A549 (cell line): ENCODE measurements at regions of chr12 and their contacts with region 1.

Region 1: GRCh38 chr12:116236148-116236731 is 41.3 kb downstream of the MED13L start:
- DNase-seq: peak; percentile 33 to 63
- ATAC-seq: peak; percentile 62 to 81; a peak in 4 of 6 replicates
- H3K4me3 ChIP-seq: no peak overlapping the region
- H3K27ac ChIP-seq: no peak overlapping the region
- H3K4me1 ChIP-seq: peaks cover 32% of the 10 kb centered on the region
- CTCF ChIP-seq: peak; percentile 91
- EP300 ChIP-seq: no peak
- POLR2A ChIP-seq: no peak
- RAD21 ChIP-seq: peak; percentile 85 to 87

Region 2: GRCh38 chr12:115998119-115998633 is 238.1 kb before region 1 on chr12:
- CTCF ChIA-PET with region 1: interaction called, 11 read pairs
- POLR2A ChIA-PET with region 1: no interaction called
- DNase-seq: peak; percentile 45 to 56
- ATAC-seq: peak; percentile 50 to 71; a peak in 4 of 6 replicates
- H3K4me3 ChIP-seq: no peak overlapping the region
- H3K27ac ChIP-seq: peak overlapping the region in 1 of 2 experiments; percentile 30; a peak in 1 of 6 replicates
- H3K4me1 ChIP-seq: 0 out of 3 replicates have a peak, but pooled peaks cover 5% of the 10 kb centered on the region
- CTCF ChIP-seq: peak; percentile 88
- EP300 ChIP-seq: no peak
- POLR2A ChIP-seq: no peak
- RAD21 ChIP-seq: peak; percentile 73 to 77

Region 3: DNA sequence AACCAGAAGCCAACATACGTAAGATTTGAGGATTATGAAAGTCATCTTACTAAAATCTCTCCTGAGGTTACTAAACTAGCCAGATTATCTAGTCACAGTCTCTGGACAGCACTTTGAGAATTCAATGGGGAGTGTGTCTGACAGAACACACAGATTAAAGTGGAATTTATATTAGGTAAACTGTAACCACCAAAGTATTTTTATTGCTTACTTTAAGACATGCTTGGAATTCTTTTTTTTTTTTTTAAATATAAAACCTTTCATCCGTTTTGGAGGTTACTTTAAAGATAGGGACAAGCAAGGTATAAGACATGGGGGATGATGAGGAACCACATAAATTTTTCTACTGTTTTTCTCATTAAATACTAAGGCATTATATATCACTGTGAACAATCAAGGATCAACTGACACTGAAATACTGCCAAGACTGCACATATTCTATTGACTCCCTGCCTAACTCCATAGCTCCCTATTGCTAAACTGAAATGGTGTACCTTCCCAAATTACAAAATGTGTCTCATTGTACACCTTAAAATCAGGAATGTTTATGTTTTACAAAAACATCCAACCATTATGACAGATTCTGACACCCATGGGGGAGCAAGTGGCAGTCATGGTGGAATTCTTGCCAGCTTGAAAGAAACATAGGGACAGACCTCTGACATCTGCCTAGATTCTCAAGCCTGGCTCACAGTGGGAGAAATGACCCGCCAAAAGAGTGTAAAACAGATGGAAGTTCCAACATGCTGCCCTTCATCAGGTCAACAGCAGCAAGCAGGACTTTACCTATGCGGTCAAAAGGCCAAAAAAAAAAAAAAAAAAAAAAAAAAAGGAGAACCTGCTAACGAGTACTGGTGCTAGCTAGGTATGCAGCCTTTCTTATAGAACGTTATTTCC is 198.1 kb before region 1 on chr12:
- CTCF ChIA-PET with region 1: interaction called, 11 read pairs
- POLR2A ChIA-PET with region 1: no interaction called
- DNase-seq: peak in 1 of 2 experiments; percentile 39
- ATAC-seq: peak; percentile 41 to 73; a peak in 4 of 6 replicates
- H3K4me3 ChIP-seq: no peak overlapping the region
- H3K27ac ChIP-seq: peak overlapping the region; percentile 40 to 68; a peak in 5 of 6 replicates
- H3K4me1 ChIP-seq: peaks cover 38% of the 10 kb centered on the region
- CTCF ChIP-seq: no peak
- EP300 ChIP-seq: no peak
- POLR2A ChIP-seq: no peak
- RAD21 ChIP-seq: no peak

Region 4: GRCh38 chr12:116048879-116049278 is 187.4 kb before region 1 on chr12:
- CTCF ChIA-PET with region 1: no interaction called
- POLR2A ChIA-PET with region 1: no interaction called
- DNase-seq: no peak
- ATAC-seq: no peak
- H3K4me3 ChIP-seq: no peak overlapping the region
- H3K27ac ChIP-seq: no peak overlapping the region
- H3K4me1 ChIP-seq: peaks cover 50% of the 10 kb centered on the region
- CTCF ChIP-seq: no peak
- EP300 ChIP-seq: no peak
- POLR2A ChIP-seq: no peak
- RAD21 ChIP-seq: no peak

Region 5: GRCh38 chr12:116142936-116143898 is 93.0 kb before region 1 on chr12:
- CTCF ChIA-PET with region 1: interaction called, 19 read pairs
- POLR2A ChIA-PET with region 1: no interaction called
- DNase-seq: peak in 1 of 2 experiments; percentile 33
- ATAC-seq: peak in 1 of 2 experiments; percentile 50; a peak in 3 of 6 replicates
- H3K4me3 ChIP-seq: no peak overlapping the region
- H3K27ac ChIP-seq: peak overlapping the region; percentile 7 to 61; a peak in 4 of 6 replicates
- H3K4me1 ChIP-seq: peaks cover 68% of the 10 kb centered on the region
- CTCF ChIP-seq: no peak
- EP300 ChIP-seq: no peak
- POLR2A ChIP-seq: no peak
- RAD21 ChIP-seq: no peak

Region 6: DNA sequence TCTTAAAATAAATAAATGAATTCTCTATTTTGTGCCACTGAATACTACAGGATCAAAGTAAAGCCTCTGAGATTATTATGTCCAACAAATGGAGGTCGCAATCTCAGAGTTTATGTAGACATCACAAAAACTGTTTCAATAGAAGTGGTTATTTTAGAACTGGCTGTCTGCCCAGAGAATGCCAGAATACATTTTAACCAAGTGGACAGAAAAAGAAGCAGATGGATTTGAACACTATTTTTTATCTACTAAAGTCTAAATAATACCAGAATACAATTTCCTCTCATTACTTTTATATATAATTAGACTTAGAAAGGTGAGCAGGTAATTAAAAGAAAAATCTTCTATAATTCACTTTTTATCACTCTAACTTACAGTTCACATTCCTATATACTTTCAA is 77.1 kb before region 1 on chr12:
- CTCF ChIA-PET with region 1: no interaction called
- POLR2A ChIA-PET with region 1: no interaction called
- DNase-seq: no peak
- ATAC-seq: no peak
- H3K4me3 ChIP-seq: no peak overlapping the region
- H3K27ac ChIP-seq: no peak overlapping the region
- H3K4me1 ChIP-seq: peaks cover 51% of the 10 kb centered on the region
- CTCF ChIP-seq: no peak
- EP300 ChIP-seq: no peak
- POLR2A ChIP-seq: no peak
- RAD21 ChIP-seq: no peak